BJ (cell line): ENCODE measurements at regions of chr5 and their contacts with region 1.

Region 1: DNA sequence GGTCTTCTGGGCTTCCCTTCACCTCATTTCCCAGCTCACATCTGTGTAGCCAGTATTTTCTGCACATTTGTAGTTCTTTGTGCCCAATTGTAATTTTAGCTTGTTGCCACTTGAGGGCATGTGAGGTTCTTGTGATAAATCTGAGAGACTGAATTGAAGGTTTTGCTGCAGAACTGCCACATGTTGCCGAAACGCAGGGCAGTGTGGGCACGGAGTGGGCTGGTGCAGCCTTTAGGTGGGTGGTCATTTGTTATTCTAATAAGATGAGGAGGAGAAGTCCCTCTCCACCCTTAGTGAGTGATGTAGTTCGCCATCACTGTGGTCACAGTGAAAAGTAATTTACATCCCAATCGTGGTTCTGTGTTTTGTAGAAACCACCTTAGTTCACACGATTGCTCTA is 21.2 kb downstream of the OTULIN start:
- DNase-seq: no peak
- H3K4me3 ChIP-seq: no peak overlapping the region
- H3K27me3 ChIP-seq: no peaks in the 10 kb centered on the region
- CTCF ChIP-seq: peak; percentile 68

Region 2: DNA sequence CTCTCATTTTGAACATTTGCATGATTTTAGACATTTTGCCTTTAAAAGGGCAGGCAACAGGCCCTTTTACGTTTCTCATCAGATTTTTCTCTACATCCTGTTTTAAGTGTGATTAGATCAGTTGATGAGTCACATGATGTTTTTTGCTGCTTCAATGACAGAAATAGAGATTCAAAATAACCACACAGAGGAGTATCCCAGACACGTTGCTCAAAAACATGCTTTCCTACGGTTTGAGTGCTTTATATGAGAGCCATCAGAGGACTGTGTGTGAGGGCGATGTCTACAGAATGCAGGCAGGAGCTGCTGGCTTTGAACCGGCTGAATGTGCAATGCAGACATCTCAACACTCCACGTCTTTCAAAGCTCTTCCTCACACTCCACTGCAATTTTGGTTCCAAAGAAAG is 20.9 kb after region 1 on chr5:
- CTCF ChIA-PET with region 1: interaction called, 23 read pairs
- POLR2A ChIA-PET with region 1: no interaction called
- DNase-seq: peak; percentile 58
- H3K4me3 ChIP-seq: no peak overlapping the region
- H3K27me3 ChIP-seq: no peaks in the 10 kb centered on the region
- CTCF ChIP-seq: no peak

Region 3: GRCh38 chr5:14720236-14720971 is 34.6 kb after region 1 on chr5:
- CTCF ChIA-PET with region 1: interaction called, 26 read pairs
- POLR2A ChIA-PET with region 1: no interaction called
- DNase-seq: no peak
- H3K4me3 ChIP-seq: no peak overlapping the region
- H3K27me3 ChIP-seq: no peaks in the 10 kb centered on the region
- CTCF ChIP-seq: no peak

Region 4: DNA sequence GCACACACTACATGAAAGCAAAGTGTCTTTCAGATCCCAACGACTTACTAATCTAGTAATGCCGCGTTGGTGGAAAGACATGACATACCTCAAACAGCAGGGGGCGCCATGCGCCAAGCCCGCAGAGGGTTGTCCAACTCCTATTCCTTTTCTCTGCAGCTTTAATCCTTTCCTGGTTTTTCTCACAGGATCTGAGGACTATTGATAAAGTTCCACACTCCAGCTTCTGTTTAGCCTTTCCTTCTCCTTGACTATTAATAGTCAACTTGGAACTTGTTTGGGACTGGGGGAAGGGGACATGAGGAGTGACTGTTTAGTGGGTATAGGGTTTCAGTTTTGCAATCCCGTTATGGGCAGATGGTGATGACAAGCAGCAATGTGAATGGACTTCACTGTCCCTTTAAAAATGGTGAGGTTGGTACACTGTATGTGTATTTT is 41.7 kb after region 1 on chr5:
- CTCF ChIA-PET with region 1: interaction called, 26 read pairs
- POLR2A ChIA-PET with region 1: no interaction called
- DNase-seq: no peak
- H3K4me3 ChIP-seq: no peak overlapping the region
- H3K27me3 ChIP-seq: no peaks in the 10 kb centered on the region
- CTCF ChIP-seq: peak; percentile 91

Region 5: DNA sequence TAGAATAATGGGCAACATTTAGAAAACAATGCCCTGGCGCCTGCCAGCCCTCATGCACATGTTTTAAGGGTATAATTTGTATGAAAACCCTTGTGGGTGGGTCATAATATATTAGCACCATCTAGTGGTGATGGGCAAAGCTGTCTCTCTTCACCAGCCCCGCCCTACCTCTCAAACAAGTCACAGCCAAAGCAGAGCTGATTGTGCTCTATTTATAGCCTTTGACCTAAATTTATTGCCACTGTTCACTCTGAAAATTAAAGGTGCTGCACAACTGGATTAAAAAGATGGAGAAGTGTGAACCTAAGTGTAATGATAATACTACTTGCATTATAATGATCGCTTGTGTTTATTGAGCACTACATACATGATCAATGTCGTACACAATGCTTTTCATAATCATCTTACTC is 317.8 kb after region 1 on chr5:
- CTCF ChIA-PET with region 1: interaction called, 32 read pairs
- POLR2A ChIA-PET with region 1: no interaction called
- DNase-seq: peak; percentile 21
- H3K4me3 ChIP-seq: no peak overlapping the region
- H3K27me3 ChIP-seq: peaks cover 7% of the 10 kb centered on the region
- CTCF ChIP-seq: peak; percentile 77

Region 6: DNA sequence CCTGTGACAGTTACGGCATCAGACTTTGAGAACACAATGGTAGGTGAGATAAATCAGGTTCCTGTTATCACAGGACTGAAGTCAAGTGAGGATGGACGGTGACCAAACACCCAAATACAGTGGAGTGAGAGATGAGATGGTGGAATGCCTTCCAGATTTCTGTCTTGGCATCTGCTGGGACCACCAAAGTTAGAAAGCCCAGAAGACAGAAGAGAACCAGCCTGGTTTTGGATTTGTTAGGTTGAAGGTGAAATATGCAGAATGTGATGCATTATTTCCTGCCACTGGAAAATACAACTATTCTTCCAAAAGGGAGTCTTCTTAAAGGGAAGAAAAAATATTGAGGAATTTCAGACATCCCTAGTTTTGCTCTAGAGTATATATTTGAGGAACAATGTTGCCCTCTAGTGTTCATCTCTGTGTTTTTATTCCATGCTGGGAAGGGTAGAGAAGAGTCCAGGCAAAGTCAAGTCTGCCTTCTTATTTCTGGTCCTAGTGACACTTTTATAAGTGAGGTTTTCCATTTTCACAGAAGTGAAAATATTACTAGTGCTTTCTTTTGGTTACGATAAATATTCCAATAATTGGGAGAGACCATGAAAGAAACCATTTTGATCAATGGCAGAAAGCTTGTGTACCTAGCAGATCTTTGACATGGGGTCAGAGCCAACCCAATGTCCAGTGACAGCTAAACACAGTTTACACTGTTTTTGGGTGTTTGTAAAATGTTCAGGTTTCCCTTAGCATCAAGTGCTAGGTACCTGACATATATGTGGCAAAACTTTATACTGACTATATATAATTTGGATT is 328.1 kb after region 1 on chr5:
- CTCF ChIA-PET with region 1: interaction called, 18 read pairs
- POLR2A ChIA-PET with region 1: no interaction called
- DNase-seq: peak; percentile 24
- H3K4me3 ChIP-seq: no peak overlapping the region
- H3K27me3 ChIP-seq: no peaks in the 10 kb centered on the region
- CTCF ChIP-seq: peak; percentile 58